ENCODE measurements at regions of chr9 and their contacts with region 1.

Region 1: GRCh38 chr9:132249123-132249522 is 87.3 kb downstream of the NTNG2 start:
- DNase-seq: peak in 2 of 10 donors; percentile 27 to 90
- H3K4me3 ChIP-seq: no peak overlapping the region
- H3K27ac ChIP-seq: no peak overlapping the region
- H3K27me3 ChIP-seq: no peaks in the 10 kb centered on the region
- CTCF ChIP-seq: no peak

Region 2: GRCh38 chr9:131762356-131762932 is 486.7 kb before region 1 on chr9:
- intact Hi-C with region 1: loop called in 1 of 2 experiments (anchors 2 kb)
- DNase-seq: peak; percentile 57 to 87 (median 68)
- H3K4me3 ChIP-seq: peak overlapping the region in 37 of 59 donors; percentile 4 to 52 (median 30)
- H3K27ac ChIP-seq: no peak overlapping the region
- H3K27me3 ChIP-seq: no peaks in the 10 kb centered on the region
- CTCF ChIP-seq: peak; percentile 79 to 100 (median 98)

Region 3: DNA sequence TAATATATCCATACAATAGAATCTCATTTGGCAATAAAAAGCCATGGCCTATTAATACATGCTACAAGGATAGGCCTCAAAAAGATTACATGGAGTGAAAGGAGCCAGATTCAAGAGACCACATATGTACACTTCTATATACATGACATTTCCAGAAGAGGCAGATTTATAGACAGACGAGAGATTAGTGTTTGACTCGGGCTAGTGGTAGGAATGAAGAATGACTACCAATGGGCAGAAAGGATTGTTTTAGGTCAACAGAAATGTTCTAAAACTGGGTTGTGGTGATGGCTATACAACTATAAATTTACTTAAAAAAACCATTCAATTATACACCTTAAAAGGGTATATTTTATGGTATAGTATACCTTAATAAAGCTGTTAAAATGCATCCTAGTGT is 63.8 kb after region 1 on chr9:
- intact Hi-C with region 1: no loop called
- DNase-seq: no peak
- H3K4me3 ChIP-seq: no peak overlapping the region
- H3K27ac ChIP-seq: no peak overlapping the region
- H3K27me3 ChIP-seq: no peaks in the 10 kb centered on the region
- CTCF ChIP-seq: peak in 1 of 56 donors; percentile 6